Endothelial cell of umbilical vein (primary cell): ENCODE measurements at regions of chr12 and their contacts with region 1.

Region 1: GRCh38 chr12:109110988-109111495 is 5.3 kb upstream of the ACACB start:
- DNase-seq: peak; percentile 84
- H3K4me3 ChIP-seq: peak overlapping the region; percentile 31 to 56 (median 38)
- H3K27ac ChIP-seq: peak overlapping the region; percentile 80
- H3K4me1 ChIP-seq: peaks cover 12% of the 10 kb centered on the region
- H3K27me3 ChIP-seq: no peaks in the 10 kb centered on the region
- CTCF ChIP-seq: no peak
- POLR2A ChIP-seq: peak; percentile 37

Region 2: DNA sequence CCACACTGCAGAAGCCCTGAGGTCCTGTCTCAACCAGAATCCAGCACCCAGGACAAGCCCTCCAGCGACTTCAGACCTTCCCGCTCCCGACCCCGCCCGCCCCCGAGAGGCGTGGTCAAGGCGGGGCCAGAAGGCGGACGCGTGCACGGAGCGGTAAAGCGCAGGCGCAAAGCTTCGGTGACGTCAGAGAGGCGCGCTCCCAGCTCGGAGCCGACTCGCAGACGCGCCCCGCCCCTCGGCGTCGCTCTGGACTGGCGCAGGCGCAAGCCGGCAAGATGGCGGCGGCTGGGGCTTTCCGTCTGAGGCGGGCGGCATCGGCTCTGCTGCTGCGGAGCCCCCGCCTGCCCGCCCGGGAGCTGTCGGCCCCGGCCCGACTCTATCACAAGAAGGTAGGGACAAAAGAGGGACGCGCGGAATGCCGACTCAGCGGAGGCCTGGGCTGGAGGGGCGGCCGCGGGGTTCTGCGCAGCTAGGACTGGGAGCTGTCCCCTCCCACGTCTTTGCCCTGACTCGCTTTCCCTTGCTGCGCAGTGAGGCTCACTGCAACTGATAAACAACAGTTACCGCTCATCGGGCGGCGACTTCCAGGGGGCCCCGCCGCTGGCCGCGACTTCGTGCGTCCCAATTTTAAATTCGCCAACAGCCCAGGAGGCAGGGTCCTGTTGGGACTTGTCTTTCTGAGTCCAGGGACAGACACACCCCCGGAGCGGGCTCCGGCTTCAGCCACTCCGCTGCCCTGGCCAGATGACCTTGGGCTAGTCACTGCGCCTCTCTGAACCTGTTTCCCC is 548.5 kb before region 1 on chr12 and contains the start of gene ISCU:
- CTCF ChIA-PET with region 1: interaction called, 5 read pairs
- POLR2A ChIA-PET with region 1: no interaction called
- dilution Hi-C with region 1: no loop called
- intact Hi-C with region 1: loop called (anchors 5 kb)
- DNase-seq: peak; percentile 96
- H3K4me3 ChIP-seq: peak within 1 kb of the TSS; percentile 78 to 95 (median 86)
- H3K27ac ChIP-seq: peak within 1 kb of the TSS; percentile 83
- H3K4me1 ChIP-seq: peaks cover 34% of the 10 kb centered on the region
- H3K27me3 ChIP-seq: no peaks in the 10 kb centered on the region
- CTCF ChIP-seq: no peak
- POLR2A ChIP-seq: peak; percentile 94
- total RNA-seq, gene ISCU: 74.8 and 75.0 TPM in 2 replicates

Region 3: DNA sequence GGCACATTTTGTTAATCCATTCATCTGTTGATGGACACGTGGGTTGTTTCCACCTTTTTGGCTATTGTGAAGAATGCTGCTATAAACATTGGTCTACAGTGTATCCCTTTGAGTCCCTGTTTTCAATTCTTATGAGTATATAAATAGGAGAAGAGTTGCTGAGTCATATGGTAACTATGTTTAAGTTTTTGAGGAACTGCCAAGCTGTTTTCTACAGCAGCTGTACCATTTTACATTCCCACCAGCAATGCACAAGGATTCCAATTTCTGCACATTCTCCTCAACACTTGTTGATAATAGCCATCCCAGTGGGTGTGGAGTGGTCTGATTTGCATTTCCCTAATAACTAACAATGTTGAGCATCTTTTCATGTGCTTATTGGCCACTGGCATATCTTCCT is 83.3 kb before region 1 on chr12:
- CTCF ChIA-PET with region 1: no interaction called
- POLR2A ChIA-PET with region 1: no interaction called
- dilution Hi-C with region 1: no loop called
- intact Hi-C with region 1: no loop called
- DNase-seq: no peak
- H3K4me3 ChIP-seq: no peak overlapping the region
- H3K27ac ChIP-seq: no peak overlapping the region
- H3K4me1 ChIP-seq: no peaks in the 10 kb centered on the region
- H3K27me3 ChIP-seq: no peaks in the 10 kb centered on the region
- CTCF ChIP-seq: no peak
- POLR2A ChIP-seq: no peak

Region 4: GRCh38 chr12:109087250-109087649 is 23.8 kb before region 1 on chr12:
- CTCF ChIA-PET with region 1: interaction called, 10 read pairs
- POLR2A ChIA-PET with region 1: no interaction called
- dilution Hi-C with region 1: no loop called
- intact Hi-C with region 1: no loop called
- DNase-seq: no peak
- H3K4me3 ChIP-seq: no peak overlapping the region
- H3K27ac ChIP-seq: no peak overlapping the region
- H3K4me1 ChIP-seq: no peaks in the 10 kb centered on the region
- H3K27me3 ChIP-seq: no peaks in the 10 kb centered on the region
- CTCF ChIP-seq: no peak
- POLR2A ChIP-seq: no peak

Region 5: DNA sequence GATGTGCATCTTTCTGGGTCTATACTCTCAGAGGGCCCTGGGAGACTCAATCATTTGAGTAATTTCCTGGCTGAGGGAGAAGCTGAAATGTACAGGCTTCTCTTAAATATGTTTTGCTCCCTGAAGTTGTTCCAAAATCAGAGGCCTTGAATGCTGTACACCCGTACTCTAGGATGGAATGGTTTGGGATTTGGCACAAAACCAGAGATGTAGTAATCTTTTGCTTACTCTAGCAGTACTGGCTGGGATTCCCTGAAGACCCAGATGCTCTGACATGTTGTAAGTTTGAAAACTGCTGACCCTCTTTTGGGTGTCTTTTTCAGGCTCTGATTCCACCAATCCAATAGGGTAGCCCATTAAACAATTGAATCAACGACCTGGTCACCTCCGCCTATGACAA is 15.7 kb after region 1 on chr12:
- CTCF ChIA-PET with region 1: interaction called, 15 read pairs
- POLR2A ChIA-PET with region 1: no interaction called
- dilution Hi-C with region 1: no loop called
- intact Hi-C with region 1: no loop called
- DNase-seq: no peak
- H3K4me3 ChIP-seq: no peak overlapping the region
- H3K27ac ChIP-seq: no peak overlapping the region
- H3K4me1 ChIP-seq: no peaks in the 10 kb centered on the region
- H3K27me3 ChIP-seq: no peaks in the 10 kb centered on the region
- CTCF ChIP-seq: no peak
- POLR2A ChIP-seq: no peak

Region 6: DNA sequence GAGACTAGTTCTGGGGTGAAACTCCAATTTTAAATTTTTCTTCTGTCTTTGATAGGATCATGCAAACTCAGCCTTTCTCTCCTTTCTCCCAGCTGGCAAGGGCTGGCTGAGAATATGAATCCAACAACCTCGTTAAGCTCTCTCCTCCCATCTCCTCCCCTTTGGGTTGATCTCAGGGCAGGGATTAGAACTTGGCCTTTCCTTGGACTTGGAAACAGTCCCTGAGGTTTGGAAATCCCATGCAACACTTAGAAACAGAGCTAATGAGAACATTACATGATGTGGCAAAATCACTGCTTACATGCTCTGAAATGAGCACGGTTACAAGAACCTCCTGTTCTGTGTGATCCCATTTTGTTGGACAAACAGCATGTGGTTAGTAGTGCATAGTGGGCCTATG is 36.9 kb after region 1 on chr12:
- CTCF ChIA-PET with region 1: interaction called, 10 read pairs
- POLR2A ChIA-PET with region 1: no interaction called
- dilution Hi-C with region 1: no loop called
- intact Hi-C with region 1: no loop called
- DNase-seq: no peak
- H3K4me3 ChIP-seq: no peak overlapping the region
- H3K27ac ChIP-seq: no peak overlapping the region
- H3K4me1 ChIP-seq: no peaks in the 10 kb centered on the region
- H3K27me3 ChIP-seq: peaks cover 2 to 3% of the 10 kb centered on the region in 2 experiments
- CTCF ChIP-seq: no peak
- POLR2A ChIP-seq: no peak

Region 7: GRCh38 chr12:109253913-109254544 is 143.0 kb after region 1 on chr12:
- CTCF ChIA-PET with region 1: interaction called, 10 read pairs
- POLR2A ChIA-PET with region 1: no interaction called
- dilution Hi-C with region 1: no loop called
- intact Hi-C with region 1: no loop called
- DNase-seq: no peak
- H3K4me3 ChIP-seq: no peak overlapping the region
- H3K27ac ChIP-seq: no peak overlapping the region
- H3K4me1 ChIP-seq: no peaks in the 10 kb centered on the region
- H3K27me3 ChIP-seq: no peaks in the 10 kb centered on the region
- CTCF ChIP-seq: no peak
- POLR2A ChIP-seq: no peak

Region 8: DNA sequence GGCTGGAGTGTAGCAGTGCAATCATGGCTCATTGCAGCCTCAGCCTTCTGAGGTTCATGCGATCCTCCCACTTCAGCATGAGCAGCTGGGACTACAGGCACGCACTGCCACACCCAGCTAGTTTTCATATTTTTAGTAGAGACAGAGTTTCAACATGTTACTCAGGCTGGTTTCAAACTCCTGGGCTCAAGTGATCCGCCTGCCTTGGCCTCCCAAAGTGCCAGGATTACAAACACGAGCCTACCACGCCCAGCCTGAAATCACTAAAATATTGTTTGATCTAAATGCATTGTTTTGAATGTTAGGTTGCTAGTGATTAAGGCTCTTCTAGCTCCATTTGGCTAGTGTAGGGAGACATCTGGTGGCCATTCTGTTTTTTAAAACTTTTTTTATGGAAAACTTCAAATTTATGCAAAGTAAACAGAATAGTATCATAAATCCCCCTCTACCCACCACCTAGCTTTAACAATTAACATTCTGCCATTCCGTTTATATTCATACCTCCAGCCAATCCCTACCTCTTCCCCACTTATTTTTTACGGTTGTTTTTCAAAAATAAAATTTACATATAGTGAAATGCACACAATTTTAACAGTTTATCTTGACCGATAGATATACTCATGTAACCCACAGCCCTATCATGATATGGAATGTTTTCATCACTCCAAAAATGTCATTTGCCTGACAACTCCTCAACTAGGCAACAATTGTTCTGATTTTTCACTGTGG is 274.5 kb after region 1 on chr12:
- CTCF ChIA-PET with region 1: interaction called, 91 read pairs
- POLR2A ChIA-PET with region 1: no interaction called
- dilution Hi-C with region 1: no loop called
- intact Hi-C with region 1: loop called (anchors 1 kb)
- DNase-seq: peak; percentile 58
- H3K4me3 ChIP-seq: no peak overlapping the region
- H3K27ac ChIP-seq: no peak overlapping the region
- H3K4me1 ChIP-seq: no peaks in the 10 kb centered on the region
- H3K27me3 ChIP-seq: peaks cover 2 to 8% of the 10 kb centered on the region in 2 experiments
- CTCF ChIP-seq: peak; percentile 16 to 23
- POLR2A ChIP-seq: no peak